HEK293 (cell line): ENCODE measurements at regions of chr14 and their contacts with region 1.

Region 1: GRCh38 chr14:24160850-24161804 is at the start of gene IRF9:
- H3K4me3 ChIP-seq: peak within 1 kb of the TSS; percentile 46
- H3K27ac ChIP-seq: 0 out of 2 replicates have a peak within 1 kb of the TSS, but pooled peaks have one; percentile 13
- H3K4me1 ChIP-seq: peaks cover 5% of the 10 kb centered on the region
- CTCF ChIP-seq: peak; percentile 95

Region 2: GRCh38 chr14:22886500-22887259 is 1274.4 kb before region 1 on chr14:
- CTCF ChIA-PET with region 1: no interaction called
- POLR2A ChIA-PET with region 1: no interaction called
- H3K4me3 ChIP-seq: peak overlapping the region; percentile 55
- H3K27ac ChIP-seq: peak overlapping the region; percentile 78
- H3K4me1 ChIP-seq: peaks cover 6% of the 10 kb centered on the region
- CTCF ChIP-seq: peak; percentile 69; the same call in 1 of the 2 replicates

Region 3: GRCh38 chr14:23469127-23469905 is 691.8 kb before region 1 on chr14 and contains the start of gene NGDN:
- CTCF ChIA-PET with region 1: no interaction called
- POLR2A ChIA-PET with region 1: no interaction called
- H3K4me3 ChIP-seq: peak within 1 kb of the TSS; percentile 91
- H3K27ac ChIP-seq: peak within 1 kb of the TSS; percentile 28; the same call in 1 of the 2 replicates
- H3K4me1 ChIP-seq: peaks cover 4% of the 10 kb centered on the region; the same call in 1 of the 2 replicates
- CTCF ChIP-seq: peak; percentile 74

Region 4: DNA sequence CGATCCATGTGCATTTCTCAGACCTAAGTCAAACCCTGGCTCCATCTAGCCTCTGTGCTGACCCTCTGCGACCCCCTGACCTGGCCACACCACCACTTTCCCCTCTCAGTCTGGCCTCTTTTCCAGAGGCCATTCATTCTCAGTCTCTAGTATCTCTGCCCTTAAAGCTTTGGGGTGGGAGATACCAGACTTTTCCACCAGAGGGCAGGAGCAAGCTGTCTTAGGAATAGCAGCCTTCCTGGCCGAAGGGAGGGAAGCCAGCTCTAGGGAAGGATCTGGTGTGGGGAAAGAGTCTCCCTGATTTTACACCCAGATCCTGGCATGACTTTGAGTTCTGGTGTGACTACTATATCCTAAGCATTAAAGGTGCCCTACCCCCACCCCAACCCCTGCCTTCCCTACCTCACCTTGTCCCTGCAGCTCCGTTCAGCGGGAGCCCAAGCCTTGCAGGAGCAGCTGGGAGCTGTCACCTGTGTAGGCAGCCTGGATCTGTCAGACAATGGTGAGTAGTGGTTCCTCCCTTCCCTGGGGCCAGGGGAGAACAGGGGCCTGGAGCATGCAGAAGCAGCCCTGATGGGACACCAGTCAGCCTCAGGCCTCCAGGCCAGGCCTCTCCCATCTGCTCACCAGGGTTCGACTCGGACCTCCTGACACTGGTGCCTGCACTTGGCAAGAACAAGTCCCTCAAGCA is 102.7 kb before region 1 on chr14:
- CTCF ChIA-PET with region 1: interaction called, 31 read pairs
- POLR2A ChIA-PET with region 1: interaction called, 9 read pairs
- H3K4me3 ChIP-seq: no peak overlapping the region
- H3K27ac ChIP-seq: no peak overlapping the region
- H3K4me1 ChIP-seq: no peaks in the 10 kb centered on the region
- CTCF ChIP-seq: peak; percentile 85

Region 5: GRCh38 chr14:24114536-24115450 is 46.3 kb before region 1 on chr14 and contains the starts of genes DCAF11 and NRL:
- CTCF ChIA-PET with region 1: interaction called, 13 read pairs
- POLR2A ChIA-PET with region 1: interaction called, 24 read pairs
- H3K4me3 ChIP-seq: peak within 1 kb of the TSS; percentile 98
- H3K27ac ChIP-seq: peak within 1 kb of the TSS; percentile 94
- H3K4me1 ChIP-seq: no peaks in the 10 kb centered on the region
- CTCF ChIP-seq: no peak

Region 6: DNA sequence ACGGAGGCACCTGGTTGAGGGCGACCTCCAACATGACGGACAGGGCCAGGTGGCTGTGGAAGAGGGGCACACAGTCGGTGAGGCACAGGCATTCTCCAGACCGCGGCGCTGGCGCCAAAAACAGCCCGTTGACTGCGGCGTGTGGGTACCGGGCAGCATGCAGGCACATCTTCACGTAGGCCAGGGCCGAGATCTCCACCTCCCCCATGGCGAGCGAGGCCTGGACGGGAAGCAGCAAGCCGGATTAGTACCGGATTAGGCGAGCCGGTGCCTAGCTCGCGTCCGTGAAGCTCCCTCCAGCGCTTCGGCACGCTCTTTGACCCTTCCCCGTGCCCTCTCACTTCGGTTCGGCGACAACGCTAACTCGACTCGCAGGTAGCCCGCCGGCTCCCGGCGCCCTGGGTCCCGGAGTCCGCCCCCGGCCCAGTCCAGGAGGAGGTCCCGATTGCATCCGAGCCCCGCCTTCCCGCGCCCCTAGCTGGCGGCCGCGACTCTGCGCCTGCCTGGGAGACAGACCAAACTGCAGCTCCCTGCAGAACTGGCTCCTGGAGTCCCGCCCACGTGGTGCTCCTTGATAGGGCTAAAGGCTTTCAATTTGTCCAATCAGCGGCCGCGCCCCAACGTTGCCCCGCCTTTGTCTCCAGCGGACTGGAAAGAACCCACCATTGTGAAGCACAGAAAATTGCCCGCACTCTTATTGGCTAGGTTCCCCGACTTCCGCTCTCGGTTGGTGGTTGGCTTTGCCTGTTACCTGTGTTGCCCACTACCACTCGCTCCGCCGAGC is 19.8 kb before region 1 on chr14 and contains the start of gene EMC9:
- CTCF ChIA-PET with region 1: interaction called, 34 read pairs
- POLR2A ChIA-PET with region 1: interaction called, 44 read pairs
- H3K4me3 ChIP-seq: peak within 1 kb of the TSS; percentile 90
- H3K27ac ChIP-seq: peak within 1 kb of the TSS; percentile 89
- H3K4me1 ChIP-seq: peaks cover 8% of the 10 kb centered on the region
- CTCF ChIP-seq: peak; percentile 78

Region 7: GRCh38 chr14:24188251-24189058 is 27.3 kb after region 1 on chr14 and contains the start of gene IPO4:
- CTCF ChIA-PET with region 1: interaction called, 12 read pairs
- POLR2A ChIA-PET with region 1: interaction called, 19 read pairs
- H3K4me3 ChIP-seq: peak within 1 kb of the TSS; percentile 84
- H3K27ac ChIP-seq: peak within 1 kb of the TSS; percentile 87
- H3K4me1 ChIP-seq: peaks cover 7% of the 10 kb centered on the region; the same call in 1 of the 2 replicates
- CTCF ChIP-seq: no peak; the same call in 1 of the 2 replicates

Region 8: GRCh38 chr14:24612196-24612595 is 451.1 kb after region 1 on chr14:
- CTCF ChIA-PET with region 1: no interaction called
- POLR2A ChIA-PET with region 1: no interaction called
- H3K4me3 ChIP-seq: no peak overlapping the region
- H3K27ac ChIP-seq: no peak overlapping the region
- H3K4me1 ChIP-seq: no peaks in the 10 kb centered on the region
- CTCF ChIP-seq: no peak